CD4-positive, alpha-beta T cell (primary cell): ENCODE measurements at regions of chr4 and their contacts with region 1.

Region 1: DNA sequence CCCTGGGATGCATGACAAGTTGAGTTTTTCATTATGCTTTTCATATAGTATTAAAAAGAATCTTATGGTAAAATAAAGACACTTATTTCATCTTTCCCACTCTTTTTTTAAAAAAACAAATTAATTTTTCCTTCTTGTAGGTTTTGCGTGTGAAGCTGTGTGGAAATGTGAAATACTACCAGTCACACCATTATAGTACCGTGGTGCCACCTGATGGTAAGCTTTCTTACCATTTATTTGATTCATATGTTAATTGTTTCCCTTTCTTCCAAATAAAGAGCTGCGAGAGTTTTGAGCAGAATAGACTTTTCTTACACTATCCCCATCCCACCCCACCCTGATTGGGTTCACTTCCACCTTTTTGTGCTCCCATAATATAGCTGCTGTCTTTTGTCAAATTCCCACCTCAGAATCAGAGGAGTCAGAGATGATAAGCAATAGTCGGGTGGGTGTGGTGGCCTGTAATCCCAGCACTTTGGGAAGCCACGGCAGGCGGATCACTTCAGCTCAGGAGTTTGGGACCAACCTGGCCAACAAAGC is 44.3 kb downstream of the CASP6 start:
- DNase-seq: peak in 5 of 14 experiments; percentile 22 to 59 (median 45)
- ATAC-seq: peak; percentile 78
- H3K4me3 ChIP-seq: no peak overlapping the region
- H3K4me3 Mint-ChIP-seq: no peak overlapping the region
- H3K27ac ChIP-seq: no peak overlapping the region
- H3K27ac Mint-ChIP-seq: no peak overlapping the region
- H3K4me1 ChIP-seq: peaks cover 37% of the 10 kb centered on the region
- H3K4me1 Mint-ChIP-seq: peaks cover 64% of the 10 kb centered on the region
- H3K27me3 ChIP-seq: no peaks in the 10 kb centered on the region
- H3K27me3 Mint-ChIP-seq: no peaks in the 10 kb centered on the region
- CTCF ChIP-seq: peak; percentile 61

Region 2: GRCh38 chr4:109218288-109218687 is 440.7 kb before region 1 on chr4:
- CTCF ChIA-PET with region 1: no interaction called
- POLR2A ChIA-PET with region 1: no interaction called
- intact Hi-C with region 1: no loop called
- DNase-seq: no peak
- ATAC-seq: no peak
- H3K4me3 ChIP-seq: no peak overlapping the region
- H3K4me3 Mint-ChIP-seq: no peak overlapping the region
- H3K27ac ChIP-seq: no peak overlapping the region
- H3K27ac Mint-ChIP-seq: no peak overlapping the region
- H3K4me1 ChIP-seq: no peaks in the 10 kb centered on the region
- H3K4me1 Mint-ChIP-seq: no peaks in the 10 kb centered on the region
- H3K27me3 ChIP-seq: peaks cover 0 to 7% of the 10 kb centered on the region in 2 experiments
- H3K27me3 Mint-ChIP-seq: peaks cover 7% of the 10 kb centered on the region
- CTCF ChIP-seq: no peak

Region 3: DNA sequence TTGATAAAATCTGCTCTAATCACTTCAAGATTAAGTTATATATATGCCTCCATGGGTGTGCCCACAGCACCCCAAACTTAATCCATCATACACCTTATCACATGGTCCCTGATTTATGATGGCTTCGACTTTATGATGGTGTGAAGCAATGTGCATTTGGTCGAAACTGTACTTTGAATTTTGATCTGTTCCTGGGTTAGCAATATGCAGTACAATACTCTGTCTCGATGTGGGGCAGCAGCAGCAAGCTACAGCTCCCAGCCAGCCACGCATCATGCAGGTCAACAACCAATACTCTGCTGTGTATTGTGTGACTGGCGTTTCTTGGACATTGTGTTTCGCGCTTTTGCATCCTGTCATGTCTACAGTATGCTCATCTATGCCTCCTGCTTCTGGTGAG is 36.3 kb before region 1 on chr4:
- CTCF ChIA-PET with region 1: interaction called, 3 read pairs
- POLR2A ChIA-PET with region 1: interaction called, 4 read pairs
- intact Hi-C with region 1: loop called in 1 of 2 experiments (anchors 5 kb)
- DNase-seq: no peak
- ATAC-seq: no peak
- H3K4me3 ChIP-seq: no peak overlapping the region
- H3K4me3 Mint-ChIP-seq: no peak overlapping the region
- H3K27ac ChIP-seq: no peak overlapping the region
- H3K27ac Mint-ChIP-seq: no peak overlapping the region
- H3K4me1 ChIP-seq: peaks cover 8% of the 10 kb centered on the region
- H3K4me1 Mint-ChIP-seq: peaks cover 81% of the 10 kb centered on the region
- H3K27me3 ChIP-seq: no peaks in the 10 kb centered on the region
- H3K27me3 Mint-ChIP-seq: no peaks in the 10 kb centered on the region
- CTCF ChIP-seq: no peak